Breast epithelium (tissue), 4 donors: ENCODE measurements at regions of chr13 and their contacts with region 1.

Region 1: DNA sequence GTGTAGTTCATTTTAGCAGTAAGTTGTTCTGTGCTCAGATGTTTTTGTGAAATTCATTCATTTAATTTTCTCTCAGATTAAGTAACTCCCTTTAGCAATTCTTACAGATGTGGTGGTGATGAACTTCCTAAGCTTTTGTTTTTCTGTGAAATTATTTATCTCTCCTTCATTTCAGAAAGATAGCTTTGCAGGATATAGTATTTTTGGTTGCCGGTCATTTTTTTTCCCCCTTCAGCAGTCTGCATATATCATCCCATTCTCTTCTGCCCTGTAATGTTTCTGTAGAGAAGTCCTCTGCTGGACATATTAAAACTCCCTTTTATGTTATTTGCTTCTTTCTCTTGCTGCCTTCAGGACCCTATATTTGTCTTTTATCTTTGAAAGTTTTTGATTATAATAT is 470.2 kb downstream of the PCDH9 start:
- DNase-seq: no peak
- H3K4me3 ChIP-seq: no peak overlapping the region
- H3K27ac ChIP-seq: no peak overlapping the region
- H3K4me1 ChIP-seq: no peaks in the 10 kb centered on the region
- H3K27me3 ChIP-seq: no peaks in the 10 kb centered on the region
- CTCF ChIP-seq: no peak
- POLR2A ChIP-seq: no peak

Region 2: GRCh38 chr13:64758521-64759244 is 2001.2 kb before region 1 on chr13:
- intact Hi-C with region 1: loop called (anchors 5 kb)
- DNase-seq: no peak
- H3K4me3 ChIP-seq: no peak overlapping the region
- H3K27ac ChIP-seq: no peak overlapping the region
- H3K4me1 ChIP-seq: no peaks in the 10 kb centered on the region
- H3K27me3 ChIP-seq: no peaks in the 10 kb centered on the region
- CTCF ChIP-seq: no peak
- POLR2A ChIP-seq: no peak

Region 3: DNA sequence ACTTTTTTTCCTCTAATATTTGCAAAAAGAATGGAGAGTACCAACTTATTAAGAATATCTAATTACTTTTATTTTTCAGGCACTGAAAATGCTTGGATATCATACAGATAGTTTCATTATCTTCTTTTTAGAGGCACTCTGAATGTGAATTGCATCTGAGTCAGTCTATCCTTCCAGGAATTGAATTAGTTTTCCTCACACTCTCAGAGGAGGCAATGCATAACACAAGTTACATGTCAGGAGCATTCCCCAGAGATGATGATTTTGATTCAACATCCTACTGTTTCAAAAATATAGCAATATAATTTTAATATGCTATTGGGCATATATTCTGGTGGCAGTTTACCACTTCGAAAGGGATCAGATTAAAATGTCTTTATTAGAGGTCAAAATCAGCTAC is 845.2 kb before region 1 on chr13:
- intact Hi-C with region 1: no loop called
- DNase-seq: no peak
- H3K4me3 ChIP-seq: no peak overlapping the region
- H3K27ac ChIP-seq: no peak overlapping the region
- H3K4me1 ChIP-seq: no peaks in the 10 kb centered on the region
- H3K27me3 ChIP-seq: no peaks in the 10 kb centered on the region
- CTCF ChIP-seq: no peak
- POLR2A ChIP-seq: no peak

Region 4: GRCh38 chr13:67696775-67697174 is 936.9 kb after region 1 on chr13:
- intact Hi-C with region 1: no loop called
- DNase-seq: no peak
- H3K4me3 ChIP-seq: no peak overlapping the region
- H3K27ac ChIP-seq: no peak overlapping the region
- H3K4me1 ChIP-seq: no peaks in the 10 kb centered on the region
- H3K27me3 ChIP-seq: no peaks in the 10 kb centered on the region
- CTCF ChIP-seq: no peak
- POLR2A ChIP-seq: no peak